Naive thymus-derived CD4-positive, alpha-beta T cell (primary cell): ENCODE measurements at regions of chr6 and their contacts with region 1.

Region 1: DNA sequence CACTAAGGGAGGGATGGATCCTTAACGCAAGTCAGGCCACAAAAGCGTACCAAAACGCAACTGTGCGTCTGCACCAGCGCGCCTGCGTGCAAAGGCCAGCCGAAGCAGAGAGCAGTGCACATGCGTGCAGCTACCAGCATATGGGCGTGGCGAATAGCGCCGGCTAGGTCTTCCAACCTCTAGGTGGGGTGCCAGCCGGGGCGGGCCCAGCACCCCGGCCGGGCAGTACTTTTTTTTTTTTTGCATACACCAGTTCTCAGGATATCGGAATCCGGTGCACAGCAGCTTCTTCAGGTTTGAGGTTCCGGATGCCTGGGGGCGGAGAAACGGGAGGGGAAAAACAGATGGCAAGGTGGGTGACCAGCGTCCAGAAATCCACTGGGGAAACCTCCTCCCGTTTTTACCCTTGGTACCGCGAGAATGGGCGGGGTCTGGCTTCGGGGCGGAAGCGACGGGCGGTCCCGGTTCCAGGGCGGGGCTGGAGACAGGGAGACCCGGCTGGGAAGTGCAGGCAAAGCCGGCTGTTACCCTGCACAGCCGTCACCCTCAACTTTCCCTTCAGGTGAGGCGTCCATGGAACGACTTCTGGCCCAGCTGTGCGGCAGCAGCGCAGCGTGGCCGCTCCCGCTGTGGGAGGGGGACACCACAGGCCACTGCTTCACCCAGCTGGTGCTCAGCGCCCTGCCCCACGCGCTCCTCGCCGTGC is at the start of gene ABCC10:
- DNase-seq: peak; percentile 89 to 98 (median 95)
- ATAC-seq: peak; percentile 97
- H3K4me3 ChIP-seq: peak within 1 kb of the TSS; percentile 77
- H3K4me3 Mint-ChIP-seq: peak within 1 kb of the TSS; percentile 89 to 98 (median 94)
- H3K27ac ChIP-seq: peak within 1 kb of the TSS; percentile 95
- H3K27ac Mint-ChIP-seq: peak within 1 kb of the TSS; percentile 93 to 100 (median 98)
- H3K4me1 ChIP-seq: peaks cover 11 to 12% of the 10 kb centered on the region in 2 donors
- H3K4me1 Mint-ChIP-seq: peaks cover 15 to 36% (median 27%) of the 10 kb centered on the region in 7 donors
- H3K27me3 ChIP-seq: no peaks in the 10 kb centered on the region
- H3K27me3 Mint-ChIP-seq: peaks cover 0 to under 1% (median 0%) of the 10 kb centered on the region in 5 donors
- total RNA-seq, gene ABCC10: 56.2 to 74.6 (median 60.4) TPM

Region 2: GRCh38 chr6:42217519-42218367 is 1209.8 kb before region 1 on chr6 and contains the start of gene MRPS10:
- CTCF ChIA-PET with region 1: no interaction called
- POLR2A ChIA-PET with region 1: no interaction called
- intact Hi-C with region 1: loop called in 1 of 2 experiments (anchors 5 kb)
- DNase-seq: peak; percentile 72 to 92 (median 87)
- ATAC-seq: peak; percentile 100
- H3K4me3 ChIP-seq: peak within 1 kb of the TSS; percentile 96
- H3K4me3 Mint-ChIP-seq: peak within 1 kb of the TSS; percentile 92 to 100 (median 98)
- H3K27ac ChIP-seq: peak within 1 kb of the TSS; percentile 77
- H3K27ac Mint-ChIP-seq: peak within 1 kb of the TSS; percentile 87 to 99 (median 97)
- H3K4me1 ChIP-seq: peaks cover 9 to 14% of the 10 kb centered on the region in 2 donors
- H3K4me1 Mint-ChIP-seq: peaks cover 7 to 34% (median 24%) of the 10 kb centered on the region in 7 donors
- H3K27me3 ChIP-seq: no peaks in the 10 kb centered on the region
- H3K27me3 Mint-ChIP-seq: no peaks in the 10 kb centered on the region
- total RNA-seq, gene MRPS10: 17.0 to 30.3 (median 25.3) TPM

Region 3: GRCh38 chr6:42984001-42984923 is 443.3 kb before region 1 on chr6 and contains the start of gene PPP2R5D:
- CTCF ChIA-PET with region 1: no interaction called
- POLR2A ChIA-PET with region 1: interaction called, 3 read pairs
- intact Hi-C with region 1: loop called in 1 of 2 experiments (anchors 5 kb)
- DNase-seq: peak; percentile 81 to 98 (median 97)
- ATAC-seq: peak; percentile 97
- H3K4me3 ChIP-seq: peak within 1 kb of the TSS; percentile 64
- H3K4me3 Mint-ChIP-seq: peak within 1 kb of the TSS; percentile 87 to 99 (median 94)
- H3K27ac ChIP-seq: peak within 1 kb of the TSS; percentile 95
- H3K27ac Mint-ChIP-seq: peak within 1 kb of the TSS; percentile 89 to 99 (median 95)
- H3K4me1 ChIP-seq: peaks cover 28 to 40% of the 10 kb centered on the region in 2 donors
- H3K4me1 Mint-ChIP-seq: peaks cover 46 to 71% (median 68%) of the 10 kb centered on the region in 7 donors
- H3K27me3 ChIP-seq: no peaks in the 10 kb centered on the region
- H3K27me3 Mint-ChIP-seq: no peaks in the 10 kb centered on the region
- total RNA-seq, gene PPP2R5D: 19.7 to 60.4 (median 28.2) TPM

Region 4: DNA sequence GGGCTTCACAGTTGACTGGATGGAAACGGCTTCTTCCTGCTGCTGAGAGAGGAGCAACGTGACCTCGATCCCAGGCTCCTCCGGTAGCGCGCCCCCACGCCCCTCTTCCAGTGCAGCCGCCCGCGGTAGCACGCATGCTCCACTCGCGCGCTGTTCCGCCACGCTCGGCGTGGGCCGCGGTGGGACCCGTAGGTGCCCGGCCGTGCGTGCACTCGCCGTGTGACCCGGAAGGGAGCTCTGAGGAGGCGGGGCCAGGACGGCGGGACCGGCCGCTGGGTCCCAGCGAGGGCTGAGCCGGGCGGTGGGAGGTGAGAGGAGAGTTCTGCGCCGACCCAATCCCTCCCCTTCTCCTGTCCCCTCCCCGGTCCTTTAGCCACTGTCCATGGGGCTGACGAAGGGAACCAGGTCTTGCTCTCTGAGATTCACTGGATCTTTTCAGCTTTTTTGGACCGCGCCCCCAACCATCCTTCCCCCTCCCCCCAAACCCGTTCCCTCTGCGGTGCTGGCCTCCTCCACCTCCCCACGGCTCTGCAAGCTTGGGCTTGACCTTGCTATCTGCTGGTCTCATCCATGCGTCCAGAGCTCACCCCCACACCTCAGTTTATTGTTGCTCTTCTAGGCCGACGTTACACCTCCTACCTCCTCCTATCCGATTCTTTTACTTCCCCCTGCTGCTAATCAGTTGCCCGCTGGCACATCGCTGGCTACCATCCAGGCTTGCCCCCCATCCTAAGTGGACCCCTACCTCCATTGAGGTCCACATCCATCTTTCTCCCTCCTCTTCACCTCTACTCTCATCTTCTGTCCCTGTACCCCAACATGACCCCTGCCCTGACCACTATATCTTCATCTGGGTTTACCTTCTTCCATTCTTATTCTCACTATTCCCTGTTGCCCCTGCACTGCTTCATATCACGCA is 245.4 kb before region 1 on chr6 and contains the start of gene CUL9:
- CTCF ChIA-PET with region 1: no interaction called
- POLR2A ChIA-PET with region 1: no interaction called
- intact Hi-C with region 1: loop called in 1 of 2 experiments (anchors 1 kb)
- DNase-seq: peak; percentile 71 to 88 (median 75)
- ATAC-seq: peak; percentile 98
- H3K4me3 ChIP-seq: peak within 1 kb of the TSS; percentile 81
- H3K4me3 Mint-ChIP-seq: peak within 1 kb of the TSS; percentile 88 to 99 (median 93)
- H3K27ac ChIP-seq: peak within 1 kb of the TSS; percentile 87
- H3K27ac Mint-ChIP-seq: peak within 1 kb of the TSS; percentile 86 to 97 (median 94)
- H3K4me1 ChIP-seq: peaks cover 34 to 51% of the 10 kb centered on the region in 2 donors
- H3K4me1 Mint-ChIP-seq: peaks cover 43 to 60% (median 57%) of the 10 kb centered on the region in 7 donors
- H3K27me3 ChIP-seq: no peaks in the 10 kb centered on the region
- H3K27me3 Mint-ChIP-seq: no peaks in the 10 kb centered on the region
- total RNA-seq, gene CUL9: 58.1 to 123 (median 111) TPM

Region 5: GRCh38 chr6:43386492-43386891 is 41.1 kb before region 1 on chr6:
- CTCF ChIA-PET with region 1: no interaction called
- POLR2A ChIA-PET with region 1: interaction called, 14 read pairs
- intact Hi-C with region 1: loop called (anchors 1 kb)
- DNase-seq: peak in 3 of 9 donors; percentile 43 to 64 (median 44)
- ATAC-seq: no peak
- H3K4me3 ChIP-seq: no peak overlapping the region
- H3K4me3 Mint-ChIP-seq: peak overlapping the region in 4 of 10 donors; percentile 23 to 63 (median 40)
- H3K27ac ChIP-seq: no peak overlapping the region
- H3K27ac Mint-ChIP-seq: peak overlapping the region in 8 of 9 donors; percentile 6 to 95 (median 73)
- H3K4me1 ChIP-seq: peaks cover 46 to 59% of the 10 kb centered on the region in 2 donors
- H3K4me1 Mint-ChIP-seq: peaks cover 54 to 78% (median 72%) of the 10 kb centered on the region in 7 donors
- H3K27me3 ChIP-seq: no peaks in the 10 kb centered on the region
- H3K27me3 Mint-ChIP-seq: peaks cover 0 to 67% (median 4%) of the 10 kb centered on the region in 5 donors

Region 6: DNA sequence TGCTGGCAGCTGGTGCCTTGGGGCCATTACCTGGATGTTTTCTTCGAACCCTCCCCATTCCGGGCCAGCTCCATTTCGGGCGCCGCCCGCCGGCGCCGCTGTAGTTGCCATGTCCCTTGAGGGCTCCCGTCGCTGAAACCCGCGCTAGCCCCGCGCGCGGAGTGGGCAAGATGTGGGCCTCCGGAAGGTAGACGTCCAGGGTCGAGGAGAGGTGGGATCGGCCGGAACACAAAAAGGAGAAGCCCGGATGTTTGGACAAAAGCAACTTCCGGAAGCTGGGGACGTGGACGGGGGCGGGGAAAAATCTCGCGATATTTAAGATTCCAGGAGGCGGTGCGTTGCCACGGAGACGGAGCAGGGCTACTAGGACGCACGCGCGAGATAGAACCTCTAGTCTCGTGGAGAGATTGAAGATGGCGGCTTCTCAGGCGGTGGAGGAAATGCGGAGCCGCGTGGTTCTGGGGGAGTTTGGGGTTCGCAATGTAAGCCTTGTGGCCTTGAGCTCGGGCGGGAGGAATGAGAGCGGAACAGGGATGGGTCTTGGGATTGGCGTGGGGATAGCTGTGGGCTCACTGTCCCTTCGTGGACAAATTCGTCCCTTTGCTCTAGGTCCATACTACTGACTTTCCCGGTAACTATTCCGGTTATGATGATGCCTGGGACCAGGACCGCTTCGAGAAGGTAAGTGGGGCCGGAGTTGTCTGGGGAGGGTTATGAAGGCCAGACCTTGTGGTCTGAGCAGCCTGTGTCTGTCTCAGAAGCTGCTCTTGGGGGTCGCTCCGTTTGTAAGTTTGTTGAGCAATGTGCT is 89.3 kb after region 1 on chr6 and contains the starts of genes POLR1C and YIPF3:
- CTCF ChIA-PET with region 1: no interaction called
- POLR2A ChIA-PET with region 1: interaction called, 12 read pairs
- intact Hi-C with region 1: loop called in 1 of 2 experiments (anchors 1 kb)
- DNase-seq: peak; percentile 83 to 97 (median 96)
- ATAC-seq: peak; percentile 95
- H3K4me3 ChIP-seq: peak within 1 kb of the TSS; percentile 100
- H3K4me3 Mint-ChIP-seq: no peak within 1 kb of the TSS
- H3K27ac ChIP-seq: peak within 1 kb of the TSS; percentile 96
- H3K27ac Mint-ChIP-seq: no peak within 1 kb of the TSS
- H3K4me1 ChIP-seq: peaks cover 32 to 36% of the 10 kb centered on the region in 2 donors
- H3K4me1 Mint-ChIP-seq: peaks cover 8 to 36% (median 31%) of the 10 kb centered on the region in 7 donors
- H3K27me3 ChIP-seq: no peaks in the 10 kb centered on the region
- H3K27me3 Mint-ChIP-seq: no peaks in the 10 kb centered on the region
- total RNA-seq, gene POLR1C: 36.3 to 61.1 (median 40.9) TPM
- total RNA-seq, gene YIPF3: 54.4 to 75.9 (median 67.3) TPM

Region 7: GRCh38 chr6:43608310-43608763 is 180.8 kb after region 1 on chr6:
- CTCF ChIA-PET with region 1: no interaction called
- POLR2A ChIA-PET with region 1: no interaction called
- intact Hi-C with region 1: no loop called
- DNase-seq: peak in 8 of 9 donors; percentile 12 to 49 (median 43)
- ATAC-seq: peak; percentile 57
- H3K4me3 ChIP-seq: no peak overlapping the region
- H3K4me3 Mint-ChIP-seq: no peak overlapping the region
- H3K27ac ChIP-seq: no peak overlapping the region
- H3K27ac Mint-ChIP-seq: peak overlapping the region in 4 of 9 donors; percentile 0 to 16 (median 4)
- H3K4me1 ChIP-seq: no peaks in the 10 kb centered on the region
- H3K4me1 Mint-ChIP-seq: peaks cover 0 to 10% (median 5%) of the 10 kb centered on the region in 7 donors
- H3K27me3 ChIP-seq: no peaks in the 10 kb centered on the region
- H3K27me3 Mint-ChIP-seq: no peaks in the 10 kb centered on the region

Region 8: DNA sequence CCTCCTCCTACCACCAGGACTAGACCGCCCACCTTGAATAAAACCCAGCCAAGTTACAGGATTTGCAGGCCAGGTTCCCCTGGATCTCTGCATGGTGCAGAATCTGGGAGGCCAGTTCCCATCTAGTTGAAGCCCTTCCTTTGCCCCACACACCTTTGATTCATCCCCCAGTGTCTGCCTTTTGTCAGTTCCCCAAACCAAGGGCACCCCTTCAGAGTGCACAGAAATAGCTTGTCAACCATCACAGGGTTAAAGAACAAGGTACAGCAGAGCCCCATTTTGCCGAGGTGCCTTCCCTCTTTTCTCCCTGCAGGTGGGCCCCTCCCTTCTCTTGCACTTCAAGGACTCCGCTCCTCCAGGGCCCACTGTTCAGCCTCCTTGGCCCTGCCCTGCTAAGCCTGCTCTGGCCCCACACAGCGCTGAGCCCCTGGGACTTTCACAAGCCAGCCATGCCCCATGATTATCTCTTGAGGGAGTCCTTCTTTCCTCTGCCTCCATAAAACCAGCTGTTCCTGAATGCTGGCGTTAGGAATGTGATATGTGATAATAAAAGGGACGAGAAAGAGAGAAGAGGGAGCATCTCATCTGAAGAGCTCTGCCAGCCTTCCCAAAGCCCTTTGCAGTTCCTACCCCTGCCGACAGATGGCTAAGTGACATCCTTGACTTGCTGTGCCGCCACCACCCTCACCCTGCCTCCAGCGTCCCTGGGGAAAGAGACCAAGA is 1240.3 kb after region 1 on chr6:
- CTCF ChIA-PET with region 1: no interaction called
- POLR2A ChIA-PET with region 1: no interaction called
- intact Hi-C with region 1: no loop called
- DNase-seq: peak in 3 of 9 donors; percentile 13 to 21 (median 18)
- ATAC-seq: peak; percentile 45
- H3K4me3 ChIP-seq: no peak overlapping the region
- H3K4me3 Mint-ChIP-seq: no peak overlapping the region
- H3K27ac ChIP-seq: no peak overlapping the region
- H3K27ac Mint-ChIP-seq: peak overlapping the region in 1 of 9 donors; percentile 16
- H3K4me1 ChIP-seq: no peaks in the 10 kb centered on the region
- H3K4me1 Mint-ChIP-seq: peaks cover 0 to 1% (median 0%) of the 10 kb centered on the region in 7 donors
- H3K27me3 ChIP-seq: no peaks in the 10 kb centered on the region
- H3K27me3 Mint-ChIP-seq: no peaks in the 10 kb centered on the region